AG04449 (cell line): ENCODE measurements at regions of chr2 and their contacts with region 1.

Region 1: GRCh38 chr2:44479122-44479887 is 117.6 kb downstream of the CAMKMT start:
- DNase-seq: peak; percentile 61
- H3K4me3 ChIP-seq: no peak overlapping the region
- CTCF ChIP-seq: peak; percentile 98

Region 2: DNA sequence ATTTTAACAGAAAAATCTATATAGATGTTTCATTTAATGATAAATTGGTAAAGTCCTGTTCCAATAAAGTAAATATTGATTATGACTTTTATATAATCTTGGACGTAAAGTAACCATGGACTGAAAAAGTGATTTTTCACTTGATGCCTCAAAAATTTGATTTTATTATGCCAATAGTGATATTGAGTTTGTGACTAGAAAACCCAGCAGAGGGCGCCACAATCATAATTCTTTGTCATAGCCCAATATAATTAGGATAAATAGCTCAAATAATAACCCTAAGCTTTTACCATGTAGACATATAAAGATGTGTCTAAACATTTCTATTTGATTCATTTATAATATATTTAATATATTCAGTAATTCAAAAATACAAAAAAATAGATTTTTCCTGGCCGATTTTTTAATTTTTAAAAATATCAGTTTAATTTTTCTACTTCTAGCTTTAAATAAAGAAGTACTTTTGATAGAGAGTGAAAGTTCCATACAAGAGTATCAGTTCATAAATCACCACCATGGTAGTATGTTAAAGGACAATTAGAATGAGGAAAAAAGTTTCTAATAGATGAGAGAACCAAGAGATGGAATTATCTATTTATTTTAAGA is 86.9 kb before region 1 on chr2:
- CTCF ChIA-PET with region 1: interaction called, 92 read pairs
- POLR2A ChIA-PET with region 1: no interaction called
- DNase-seq: no peak
- H3K4me3 ChIP-seq: no peak overlapping the region
- CTCF ChIP-seq: peak; percentile 44

Region 3: DNA sequence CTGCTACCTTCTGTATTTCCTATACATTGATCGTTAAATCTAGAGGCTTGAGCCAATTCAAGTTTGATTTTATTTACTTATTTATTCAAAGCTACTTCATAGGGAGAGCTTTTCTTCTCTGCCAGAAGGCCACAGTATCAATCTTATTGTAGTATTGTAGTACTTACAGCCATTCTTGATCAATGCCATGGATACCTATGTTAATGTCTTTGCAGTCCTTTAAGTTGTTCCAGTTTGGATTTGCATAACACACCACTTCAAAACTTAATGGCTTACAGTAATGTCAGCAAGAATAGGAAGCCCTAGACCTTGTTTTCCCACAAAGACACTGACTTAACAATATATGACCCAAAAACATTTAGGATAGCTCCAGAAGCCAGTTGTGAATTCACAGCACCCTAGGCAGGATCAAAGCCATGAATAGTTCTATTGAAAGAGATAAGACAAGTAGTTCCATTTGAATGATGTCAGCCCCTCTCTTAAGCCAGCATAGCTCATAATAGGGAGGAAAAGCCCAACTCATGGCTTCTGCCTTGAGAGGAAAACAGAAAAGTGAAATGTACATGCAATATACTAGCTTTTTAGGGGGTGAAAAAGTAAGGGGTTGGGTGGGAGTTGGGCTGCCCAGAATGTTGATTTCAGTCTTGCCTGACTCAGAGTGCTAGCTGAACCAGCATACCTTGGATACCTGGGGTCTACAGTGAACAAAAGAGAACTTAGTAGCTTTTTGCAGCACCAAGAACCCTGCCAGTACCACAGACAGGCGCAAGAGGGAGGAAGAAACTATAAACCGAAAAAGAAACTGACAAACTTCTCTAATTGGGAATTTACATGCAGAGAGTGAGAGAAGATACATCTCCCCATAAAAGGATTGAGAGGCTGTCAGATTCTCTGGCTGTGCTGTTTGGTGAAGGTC is 16.1 kb before region 1 on chr2:
- CTCF ChIA-PET with region 1: interaction called, 46 read pairs
- POLR2A ChIA-PET with region 1: no interaction called
- DNase-seq: no peak
- H3K4me3 ChIP-seq: no peak overlapping the region
- CTCF ChIP-seq: no peak

Region 4: DNA sequence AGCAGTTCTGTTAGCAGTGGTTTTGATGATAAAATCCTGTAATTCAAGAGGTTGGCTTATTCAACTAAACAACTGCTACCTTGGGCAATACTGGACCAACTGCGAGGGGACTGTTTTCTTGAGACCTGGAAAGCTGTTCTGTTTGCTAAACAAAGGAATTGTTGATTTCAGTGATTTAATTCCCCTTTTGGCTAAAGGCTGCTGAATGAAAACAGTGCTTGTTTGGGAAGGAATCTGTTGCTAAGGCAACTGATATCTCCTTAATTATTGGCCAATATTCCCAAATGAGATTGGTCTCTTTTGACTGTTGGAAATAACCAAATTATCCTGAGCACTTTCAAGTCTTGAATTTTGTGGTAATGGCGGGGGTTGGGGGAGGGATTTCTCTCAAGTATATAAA is 19.2 kb after region 1 on chr2:
- CTCF ChIA-PET with region 1: interaction called, 75 read pairs
- POLR2A ChIA-PET with region 1: no interaction called
- DNase-seq: no peak
- H3K4me3 ChIP-seq: no peak overlapping the region
- CTCF ChIP-seq: no peak

Region 5: DNA sequence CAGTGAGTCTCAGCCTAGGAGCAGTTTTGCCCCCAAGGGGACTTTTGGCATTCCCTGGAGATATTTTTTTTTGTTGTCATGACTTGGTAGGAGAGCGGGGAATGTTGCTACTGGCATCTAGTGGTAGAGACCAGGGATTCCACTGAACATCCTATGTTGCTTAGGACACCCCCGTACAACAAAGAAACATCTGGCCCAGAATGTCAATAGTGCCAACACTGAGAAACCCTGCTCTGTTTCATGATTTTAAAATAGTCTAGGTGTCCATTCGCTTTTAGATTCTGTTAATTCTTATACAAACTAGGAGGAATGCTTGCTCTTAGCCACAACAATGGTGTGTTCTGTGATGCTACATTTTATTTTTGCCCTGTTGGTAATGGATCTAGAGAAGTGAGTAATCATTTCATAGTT is 236.4 kb after region 1 on chr2:
- CTCF ChIA-PET with region 1: interaction called, 56 read pairs
- POLR2A ChIA-PET with region 1: no interaction called
- DNase-seq: no peak
- H3K4me3 ChIP-seq: no peak overlapping the region
- CTCF ChIP-seq: peak; percentile 55